ENCODE measurements at regions of chr17 and their contacts with region 1.

Region 1: DNA sequence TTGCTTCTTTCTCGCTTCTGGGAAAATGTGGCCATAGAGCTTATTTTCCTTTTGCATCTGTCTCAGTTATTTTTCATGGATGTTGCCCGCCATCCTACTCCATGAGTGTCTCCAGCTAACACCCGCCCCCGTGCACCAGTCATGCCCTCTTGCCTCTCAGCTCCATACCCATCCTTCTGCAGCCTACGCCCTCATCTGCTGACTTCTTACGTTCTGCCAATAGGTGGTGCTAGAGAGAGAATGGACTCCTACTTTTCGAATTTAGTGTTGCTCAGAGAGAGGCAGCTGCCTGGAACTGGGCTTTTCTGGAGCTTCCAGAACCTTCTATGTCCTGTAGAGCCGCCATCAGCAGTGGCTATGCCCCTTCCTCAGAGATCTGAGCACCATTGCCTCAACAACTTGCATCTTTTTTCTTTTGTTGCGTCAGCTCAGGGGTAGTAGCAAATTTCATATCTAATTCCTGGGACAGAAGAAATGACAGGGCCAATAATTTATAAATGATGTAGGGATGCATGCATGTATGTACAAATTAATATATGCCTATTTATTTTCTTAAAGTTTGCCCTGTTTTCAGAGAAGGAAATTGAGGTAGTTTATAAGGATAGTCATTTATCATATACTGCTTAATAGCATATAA is 119.7 kb upstream of the MYOCD start:
- DNase-seq: no peak
- ATAC-seq: peak; percentile 81 to 82
- H3K4me3 ChIP-seq: no peak overlapping the region
- H3K27ac ChIP-seq: no peak overlapping the region
- H3K4me1 ChIP-seq: no peaks in the 10 kb centered on the region
- H3K27me3 ChIP-seq: peaks cover 3% of the 10 kb centered on the region

Region 2: DNA sequence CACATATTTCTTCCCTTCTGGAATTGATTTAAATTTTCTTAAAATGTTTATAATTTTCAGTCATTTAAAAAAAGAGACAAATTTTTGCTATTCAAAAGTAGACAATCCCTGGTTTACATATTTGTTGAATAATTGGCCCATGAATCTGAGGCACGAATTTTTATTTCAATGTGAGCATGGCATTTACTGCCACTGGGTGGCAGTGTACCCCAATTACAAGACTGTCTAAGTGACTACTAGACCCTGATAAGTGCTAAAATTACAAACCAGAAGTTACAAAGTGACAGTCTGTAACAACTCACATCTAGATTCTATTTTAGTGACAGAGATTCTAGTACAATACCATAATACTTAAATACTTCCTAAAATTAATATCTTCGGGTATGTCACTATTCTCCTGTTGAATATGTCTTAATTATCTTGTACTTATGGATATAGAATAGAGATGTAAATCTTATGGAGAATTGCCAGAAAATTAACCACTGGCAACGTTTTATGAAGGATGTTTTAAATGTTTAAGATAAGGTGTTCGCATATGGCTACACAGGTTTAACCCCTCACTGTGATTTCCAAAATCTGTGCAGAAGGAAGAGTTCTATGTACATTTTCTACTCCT is 289.5 kb before region 1 on chr17:
- intact Hi-C with region 1: loop called in 1 of 4 experiments (anchors 10 kb)
- DNase-seq: peak; percentile 23 to 57 (median 45)
- ATAC-seq: peak; percentile 66 to 70
- H3K4me3 ChIP-seq: no peak overlapping the region
- H3K27ac ChIP-seq: no peak overlapping the region
- H3K4me1 ChIP-seq: no peaks in the 10 kb centered on the region
- H3K27me3 ChIP-seq: no peaks in the 10 kb centered on the region

Region 3: GRCh38 chr17:12457493-12457892 is 88.5 kb before region 1 on chr17:
- intact Hi-C with region 1: no loop called
- DNase-seq: no peak
- ATAC-seq: no peak
- H3K4me3 ChIP-seq: no peak overlapping the region
- H3K27ac ChIP-seq: no peak overlapping the region
- H3K4me1 ChIP-seq: no peaks in the 10 kb centered on the region
- H3K27me3 ChIP-seq: no peaks in the 10 kb centered on the region

Region 4: GRCh38 chr17:12637015-12637414 is 91.0 kb after region 1 on chr17:
- intact Hi-C with region 1: loop called in 1 of 4 experiments (anchors 10 kb)
- DNase-seq: no peak
- ATAC-seq: no peak
- H3K4me3 ChIP-seq: no peak overlapping the region
- H3K27ac ChIP-seq: no peak overlapping the region
- H3K4me1 ChIP-seq: no peaks in the 10 kb centered on the region
- H3K27me3 ChIP-seq: no peaks in the 10 kb centered on the region

Region 5: DNA sequence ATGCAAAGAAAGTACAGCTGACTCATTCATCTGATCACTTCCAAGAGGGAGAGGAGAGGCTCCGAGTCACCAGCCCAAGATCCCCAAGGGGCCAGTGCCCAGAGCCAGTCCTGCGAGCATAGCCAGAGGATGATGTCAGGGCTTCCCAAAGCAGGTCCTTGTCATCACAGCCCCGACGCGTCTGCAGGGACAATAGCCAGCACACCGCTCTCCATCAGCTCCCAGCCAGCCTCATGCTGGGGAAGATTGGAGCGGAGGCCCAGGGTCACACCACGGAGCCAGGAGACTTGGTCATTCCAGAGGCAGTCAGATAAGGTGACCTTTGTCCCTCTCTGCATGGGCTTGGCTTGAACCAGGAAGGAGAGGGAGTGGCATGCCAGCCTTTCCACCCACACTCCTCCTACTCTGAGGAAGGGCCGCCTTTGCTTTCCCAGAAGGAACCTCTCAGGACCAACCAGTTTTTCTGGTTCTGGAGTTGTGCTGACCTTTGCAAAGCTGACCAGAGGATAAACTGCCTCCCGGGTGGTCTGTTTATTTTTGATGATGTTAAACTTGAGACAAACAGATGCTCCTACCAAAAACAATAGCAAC is 185.0 kb after region 1 on chr17:
- intact Hi-C with region 1: loop called in 1 of 4 experiments (anchors 10 kb)
- DNase-seq: peak; percentile 82 to 93 (median 90)
- ATAC-seq: peak; percentile 88 to 89
- H3K4me3 ChIP-seq: no peak overlapping the region
- H3K27ac ChIP-seq: peak overlapping the region; percentile 90
- H3K4me1 ChIP-seq: peaks cover 9% of the 10 kb centered on the region
- H3K27me3 ChIP-seq: no peaks in the 10 kb centered on the region

Region 6: DNA sequence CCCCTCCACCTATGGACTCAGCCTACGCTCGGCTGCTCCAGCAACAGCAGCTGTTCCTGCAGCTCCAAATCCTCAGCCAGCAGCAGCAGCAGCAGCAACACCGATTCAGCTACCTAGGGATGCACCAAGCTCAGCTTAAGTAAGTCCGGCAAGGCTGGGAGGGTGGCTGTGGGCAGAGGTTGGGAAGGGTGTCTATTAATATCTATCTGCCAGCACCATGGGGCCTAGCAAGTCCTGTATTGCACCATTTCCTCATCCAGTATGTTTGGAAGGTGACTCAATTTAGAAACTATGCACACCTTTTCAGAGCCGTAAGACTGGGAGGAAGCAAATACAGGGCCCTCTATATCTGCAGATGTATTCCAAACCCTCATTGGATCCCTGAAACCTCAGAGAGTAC is 198.3 kb after region 1 on chr17:
- intact Hi-C with region 1: loop called in 2 of 4 experiments (anchors 5 to 10 kb)
- DNase-seq: peak in 2 of 3 donors; percentile 64 to 67
- ATAC-seq: peak; percentile 84 to 89
- H3K4me3 ChIP-seq: no peak overlapping the region
- H3K27ac ChIP-seq: peak overlapping the region; percentile 99
- H3K4me1 ChIP-seq: peaks cover 2% of the 10 kb centered on the region
- H3K27me3 ChIP-seq: no peaks in the 10 kb centered on the region

Region 7: DNA sequence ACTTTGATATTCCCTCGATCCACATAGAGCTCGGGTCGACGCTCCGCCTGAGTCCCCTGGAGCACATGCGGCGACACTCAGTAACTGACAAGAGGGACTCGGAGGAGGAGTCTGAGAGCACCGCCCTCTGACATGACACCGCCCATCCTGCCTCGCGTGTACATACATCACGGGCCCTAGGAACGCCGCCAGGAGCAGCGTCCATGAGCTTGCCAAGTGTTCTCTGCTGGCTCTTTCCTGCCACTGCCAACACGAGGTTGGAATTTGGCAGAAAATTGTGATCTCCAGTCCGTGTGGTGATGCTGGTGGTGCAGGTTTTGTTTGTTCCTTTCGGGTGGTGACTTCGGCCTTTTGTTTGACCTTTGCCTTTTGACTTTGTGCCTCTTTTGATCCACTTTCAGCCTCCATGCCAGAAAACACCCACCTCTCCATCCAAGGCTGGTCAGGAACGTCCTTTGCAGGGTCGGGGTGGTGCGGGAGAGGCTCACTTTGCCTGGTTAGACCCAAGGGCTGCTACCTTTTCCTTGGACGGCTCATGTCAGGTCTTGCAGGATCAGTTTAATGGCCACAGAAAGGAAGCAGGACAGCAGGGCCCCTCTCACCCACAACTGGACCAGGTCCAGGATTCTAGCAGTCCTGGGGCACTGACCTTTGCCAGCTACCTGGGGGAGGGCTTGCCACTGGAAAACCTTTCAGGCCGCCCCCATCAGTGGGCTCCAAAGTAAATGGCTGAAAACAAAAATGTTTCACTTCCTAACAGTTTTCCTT is 444.2 kb after region 1 on chr17:
- intact Hi-C with region 1: loop called in 1 of 4 experiments (anchors 10 kb)
- DNase-seq: peak; percentile 73 to 89 (median 88)
- ATAC-seq: peak; percentile 77 to 78
- H3K4me3 ChIP-seq: no peak overlapping the region
- H3K27ac ChIP-seq: peak overlapping the region; percentile 28
- H3K4me1 ChIP-seq: peaks cover 7% of the 10 kb centered on the region
- H3K27me3 ChIP-seq: no peaks in the 10 kb centered on the region